T-cell (primary cell): ENCODE measurements at regions of chr6 and their contacts with region 1.

Region 1: DNA sequence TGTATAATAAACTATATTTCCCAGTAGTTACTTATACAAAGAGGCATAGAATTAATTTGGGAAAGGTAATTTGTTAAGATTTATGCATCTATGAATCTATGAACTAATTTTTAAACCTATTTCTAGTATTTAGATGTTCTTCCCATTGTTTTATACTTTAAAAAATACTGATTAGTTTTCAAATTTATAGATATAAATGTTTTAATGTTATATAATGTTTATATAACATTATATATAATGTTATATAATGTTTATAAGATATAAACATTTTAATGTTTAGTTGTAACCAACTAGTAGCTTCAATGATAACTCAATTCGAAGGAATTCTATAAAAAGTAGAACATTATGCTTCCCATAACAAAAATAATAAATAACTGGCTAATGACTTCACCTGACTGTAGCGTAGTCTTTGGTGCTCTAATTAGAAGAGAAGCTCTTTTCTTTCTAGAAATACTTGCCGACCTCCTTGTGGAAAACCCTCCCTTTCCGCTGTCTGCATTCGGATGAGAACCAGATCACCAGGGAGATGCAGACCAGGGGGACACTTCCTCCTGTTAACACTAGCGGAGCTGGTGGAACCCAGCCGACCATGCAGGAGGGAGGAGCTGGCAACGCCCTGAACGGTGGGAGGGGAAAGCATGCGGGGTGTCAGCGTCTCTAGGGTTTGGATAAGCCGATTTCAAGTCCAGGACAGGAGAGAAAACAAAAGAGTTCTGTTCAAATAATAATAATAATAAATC is 158.4 kb downstream of the OR2B2 start:
- DNase-seq: peak in 34 of 35 experiments; percentile 16 to 69 (median 46)
- ATAC-seq: peak in 1 of 4 experiments; percentile 27
- H3K4me3 ChIP-seq: peak overlapping the region; percentile 52 to 92
- H3K4me3 Mint-ChIP-seq: peak overlapping the region; percentile 82 to 98 (median 89)
- H3K27ac ChIP-seq: no peak overlapping the region
- H3K27ac Mint-ChIP-seq: peak overlapping the region; percentile 9 to 71
- H3K4me1 ChIP-seq: peaks cover 8 to 23% of the 10 kb centered on the region in 2 experiments
- H3K4me1 Mint-ChIP-seq: peaks cover 30 to 42% (median 37%) of the 10 kb centered on the region in 3 donors
- H3K27me3 ChIP-seq: peaks cover 0 to 13% of the 10 kb centered on the region in 2 experiments
- H3K27me3 Mint-ChIP-seq: peaks cover 0 to 7% of the 10 kb centered on the region in 2 donors

Region 2: DNA sequence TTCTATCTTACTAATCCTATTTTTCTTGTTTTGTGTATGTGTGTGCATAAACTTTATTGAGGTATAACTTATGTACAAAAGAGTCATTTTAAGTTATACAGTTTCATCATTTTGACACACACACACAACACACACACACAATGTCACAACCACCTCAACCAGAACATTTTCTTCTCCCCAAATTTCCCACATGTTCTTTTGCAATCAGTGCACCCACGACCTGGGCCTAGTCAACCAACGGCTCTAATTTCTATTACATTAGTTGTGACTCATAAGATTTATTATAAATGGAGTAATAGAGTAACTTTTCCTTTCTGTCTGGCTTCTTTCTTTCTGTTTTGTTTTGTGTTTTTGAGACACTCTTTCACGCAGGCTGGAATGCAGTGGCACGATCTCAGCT is 431.9 kb before region 1 on chr6:
- CTCF ChIA-PET with region 1: no interaction called
- POLR2A ChIA-PET with region 1: no interaction called
- DNase-seq: no peak
- ATAC-seq: no peak
- H3K4me3 ChIP-seq: no peak overlapping the region
- H3K4me3 Mint-ChIP-seq: no peak overlapping the region
- H3K27ac ChIP-seq: no peak overlapping the region
- H3K27ac Mint-ChIP-seq: no peak overlapping the region
- H3K4me1 ChIP-seq: no peaks in the 10 kb centered on the region
- H3K4me1 Mint-ChIP-seq: no peaks in the 10 kb centered on the region
- H3K27me3 ChIP-seq: peaks cover 10 to 11% of the 10 kb centered on the region in 2 experiments
- H3K27me3 Mint-ChIP-seq: peaks cover 42 to 48% of the 10 kb centered on the region in 2 donors

Region 3: GRCh38 chr6:27518881-27519795 is 234.7 kb before region 1 on chr6:
- CTCF ChIA-PET with region 1: interaction called in 1 of 2 experiments, 22 read pairs
- POLR2A ChIA-PET with region 1: no interaction called
- DNase-seq: peak; percentile 37 to 84 (median 53)
- ATAC-seq: peak; percentile 67 to 80 (median 76)
- H3K4me3 ChIP-seq: peak overlapping the region; percentile 92 to 98
- H3K4me3 Mint-ChIP-seq: peak overlapping the region; percentile 86 to 99 (median 90)
- H3K27ac ChIP-seq: peak overlapping the region; percentile 78
- H3K27ac Mint-ChIP-seq: peak overlapping the region; percentile 60 to 71
- H3K4me1 ChIP-seq: peaks cover 6 to 15% of the 10 kb centered on the region in 2 experiments
- H3K4me1 Mint-ChIP-seq: peaks cover 16 to 27% (median 20%) of the 10 kb centered on the region in 3 donors
- H3K27me3 ChIP-seq: peaks cover 3 to 17% of the 10 kb centered on the region in 2 experiments
- H3K27me3 Mint-ChIP-seq: peaks cover 9 to 24% of the 10 kb centered on the region in 2 donors

Region 4: DNA sequence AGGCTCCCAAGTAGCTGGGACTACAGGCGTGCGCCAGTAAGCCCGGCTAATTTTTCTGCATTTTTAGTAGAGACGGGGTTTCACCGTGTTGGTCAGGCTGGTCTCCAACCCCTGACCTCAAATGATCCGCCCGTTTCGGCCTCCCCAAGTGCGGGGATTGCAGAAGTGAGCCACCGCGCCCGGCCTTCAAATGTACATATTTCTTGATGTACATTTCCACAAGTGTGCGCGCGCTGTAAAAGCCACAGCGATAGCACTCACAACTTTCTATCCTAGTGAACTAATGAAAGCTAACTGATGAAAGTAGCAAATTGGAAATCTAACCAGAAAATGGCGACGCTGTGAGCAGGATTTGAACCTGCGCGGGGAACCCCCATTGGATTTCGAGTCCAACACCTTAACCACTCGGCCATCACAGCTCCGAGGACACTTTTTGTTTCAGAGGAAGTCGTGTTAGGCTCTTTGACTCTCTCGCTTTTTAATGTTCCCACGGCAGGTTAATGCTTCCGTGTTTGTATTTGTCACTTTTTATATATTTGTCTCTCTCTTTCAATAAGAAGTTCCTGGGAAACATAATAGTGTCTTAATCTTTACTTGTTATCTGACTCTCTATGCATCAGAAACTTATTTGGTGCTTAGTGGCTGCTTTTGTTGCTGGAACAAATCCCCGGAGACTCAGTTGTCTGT is 81.6 kb before region 1 on chr6:
- CTCF ChIA-PET with region 1: interaction called in 1 of 2 experiments, 8 read pairs
- POLR2A ChIA-PET with region 1: interaction called in 1 of 2 experiments, 13 read pairs
- DNase-seq: peak in 2 of 35 experiments; percentile 13 to 54
- ATAC-seq: no peak
- H3K4me3 ChIP-seq: peak overlapping the region in 1 of 2 donors; percentile 39
- H3K4me3 Mint-ChIP-seq: peak overlapping the region in 1 of 3 donors; percentile 56
- H3K27ac ChIP-seq: no peak overlapping the region
- H3K27ac Mint-ChIP-seq: peak overlapping the region in 1 of 2 donors; percentile 6
- H3K4me1 ChIP-seq: peaks cover 0 to 23% of the 10 kb centered on the region in 2 experiments
- H3K4me1 Mint-ChIP-seq: peaks cover 26 to 38% (median 32%) of the 10 kb centered on the region in 3 donors
- H3K27me3 ChIP-seq: peaks cover 38 to 77% of the 10 kb centered on the region in 2 experiments
- H3K27me3 Mint-ChIP-seq: peaks cover 74 to 87% of the 10 kb centered on the region in 2 donors

Region 5: DNA sequence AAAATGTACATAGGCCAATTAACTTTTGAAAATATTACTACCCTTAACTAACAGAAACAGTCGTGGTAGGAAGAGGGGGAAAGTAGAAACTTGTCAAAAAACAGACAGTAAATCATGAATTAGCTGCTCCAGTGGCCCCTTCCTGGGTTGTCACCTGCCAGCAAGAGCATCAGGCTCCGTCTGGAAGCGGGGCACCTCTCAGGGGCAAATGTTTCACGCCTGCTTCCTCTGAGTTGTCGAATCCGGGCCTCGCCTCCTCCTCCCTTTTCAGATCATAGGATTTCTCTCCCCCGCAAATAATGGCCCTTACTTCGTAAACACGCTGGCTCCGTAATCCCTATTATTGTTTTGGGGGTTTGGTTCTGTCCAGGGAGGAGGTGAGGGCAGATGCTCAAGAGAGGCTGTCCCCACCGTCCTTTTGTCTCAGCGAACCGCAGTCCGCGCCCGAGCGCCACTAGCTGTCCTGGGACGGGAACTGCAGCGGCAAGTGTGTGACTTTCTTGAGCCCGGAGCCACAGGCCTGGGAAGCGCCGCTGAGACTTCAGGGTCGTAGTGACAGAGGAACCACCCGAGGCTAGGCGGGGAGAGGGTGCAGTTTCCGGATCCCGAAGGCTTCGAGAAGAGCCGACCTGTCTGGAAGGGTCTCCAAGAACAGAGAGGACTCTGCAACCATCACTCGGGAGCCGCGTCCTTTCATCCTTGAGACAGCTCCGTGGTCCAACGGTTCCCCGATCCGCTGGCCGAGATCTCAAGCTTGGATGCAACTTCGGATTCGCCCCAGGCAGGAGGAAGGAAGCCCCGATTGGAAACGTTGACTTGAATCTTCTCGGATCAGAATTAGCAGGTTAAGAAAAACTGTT is 66.5 kb before region 1 on chr6:
- CTCF ChIA-PET with region 1: interaction called, 3 to 27 read pairs
- POLR2A ChIA-PET with region 1: interaction called in 1 of 2 experiments, 4 read pairs
- DNase-seq: peak; percentile 47 to 84 (median 65)
- ATAC-seq: peak; percentile 63 to 78 (median 76)
- H3K4me3 ChIP-seq: peak overlapping the region; percentile 78 to 79
- H3K4me3 Mint-ChIP-seq: peak overlapping the region; percentile 85 to 94 (median 85)
- H3K27ac ChIP-seq: peak overlapping the region; percentile 40
- H3K27ac Mint-ChIP-seq: peak overlapping the region; percentile 86 to 91
- H3K4me1 ChIP-seq: peaks cover 4 to 19% of the 10 kb centered on the region in 2 experiments
- H3K4me1 Mint-ChIP-seq: peaks cover 24 to 30% (median 27%) of the 10 kb centered on the region in 3 donors
- H3K27me3 ChIP-seq: peaks cover 10 to 18% of the 10 kb centered on the region in 2 experiments
- H3K27me3 Mint-ChIP-seq: peaks cover 0 to 11% of the 10 kb centered on the region in 2 donors

Region 6: GRCh38 chr6:27743818-27744217 is 10.0 kb before region 1 on chr6:
- CTCF ChIA-PET with region 1: interaction called in 1 of 2 experiments, 23 read pairs
- POLR2A ChIA-PET with region 1: no interaction called
- DNase-seq: no peak
- ATAC-seq: no peak
- H3K4me3 ChIP-seq: no peak overlapping the region
- H3K4me3 Mint-ChIP-seq: no peak overlapping the region
- H3K27ac ChIP-seq: no peak overlapping the region
- H3K27ac Mint-ChIP-seq: no peak overlapping the region
- H3K4me1 ChIP-seq: no peaks in the 10 kb centered on the region
- H3K4me1 Mint-ChIP-seq: peaks cover under 1 to 2% (median 2%) of the 10 kb centered on the region in 3 donors
- H3K27me3 ChIP-seq: peaks cover 9 to 34% of the 10 kb centered on the region in 2 experiments
- H3K27me3 Mint-ChIP-seq: peaks cover 25 to 35% of the 10 kb centered on the region in 2 donors

Region 7: DNA sequence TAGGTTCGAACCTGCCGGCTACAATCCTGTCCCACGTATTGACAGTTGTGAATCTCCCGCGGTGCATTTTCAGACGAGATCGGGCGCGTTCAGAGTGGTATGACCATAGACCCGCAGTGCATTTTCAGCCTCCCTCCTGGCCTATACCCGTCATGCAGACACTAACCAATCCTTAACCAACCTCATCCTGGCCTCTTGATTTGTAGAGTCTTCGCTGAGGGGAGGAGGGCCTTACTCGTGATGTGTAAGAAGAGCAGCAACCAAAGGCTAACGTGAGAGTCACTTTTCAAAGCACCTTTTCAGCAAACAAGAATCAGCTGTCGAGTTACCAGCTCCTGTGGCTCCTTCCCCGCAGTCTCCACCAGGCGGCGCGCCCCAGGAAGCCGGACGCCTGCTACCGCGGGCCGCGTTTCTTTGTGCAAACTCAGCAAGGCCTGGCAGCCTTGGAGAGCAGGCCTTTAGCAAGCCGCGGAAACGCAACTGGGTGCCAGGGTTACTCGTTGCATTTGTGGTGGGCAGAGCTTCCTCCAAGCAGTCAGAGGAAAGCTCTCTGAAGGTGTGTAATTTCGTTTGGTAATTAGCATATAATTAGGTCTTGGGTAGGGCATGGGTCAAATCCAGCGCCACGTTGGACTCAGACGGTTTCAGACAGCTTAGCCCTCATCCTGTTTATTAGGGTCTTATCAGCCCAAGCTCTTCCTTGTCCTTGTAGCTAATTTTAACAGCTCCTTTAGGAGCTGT is 18.6 kb after region 1 on chr6:
- CTCF ChIA-PET with region 1: interaction called, 7 to 15 read pairs
- POLR2A ChIA-PET with region 1: no interaction called
- DNase-seq: peak; percentile 74 to 90 (median 84)
- ATAC-seq: peak; percentile 98 to 99 (median 98)
- H3K4me3 ChIP-seq: no peak overlapping the region
- H3K4me3 Mint-ChIP-seq: peak overlapping the region in 2 of 3 donors; percentile 7 to 30
- H3K27ac ChIP-seq: no peak overlapping the region
- H3K27ac Mint-ChIP-seq: no peak overlapping the region
- H3K4me1 ChIP-seq: peaks cover 0 to 12% of the 10 kb centered on the region in 2 experiments
- H3K4me1 Mint-ChIP-seq: peaks cover 8% of the 10 kb centered on the region in 3 donors
- H3K27me3 ChIP-seq: peaks cover 0 to 5% of the 10 kb centered on the region in 2 experiments
- H3K27me3 Mint-ChIP-seq: peaks cover 11 to 20% of the 10 kb centered on the region in 2 donors

Region 8: DNA sequence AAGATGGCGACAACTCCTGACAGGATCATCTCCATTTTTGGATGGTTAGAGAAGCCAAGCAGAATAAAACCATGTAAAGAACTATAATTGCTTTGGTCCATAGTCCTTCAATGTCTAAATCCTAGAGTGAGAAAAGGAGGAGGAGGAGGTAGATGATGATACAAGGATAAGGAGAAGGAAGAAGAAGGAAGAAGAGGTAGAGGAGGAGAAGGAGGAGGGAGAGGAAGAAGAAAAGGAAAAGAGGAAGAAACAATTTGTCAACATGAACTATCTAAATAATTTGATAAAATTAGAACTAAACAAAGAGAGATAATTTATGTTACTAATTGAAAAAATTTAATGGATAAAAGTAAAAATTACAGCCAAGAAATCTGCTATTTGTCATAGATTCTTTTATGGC is 1291.2 kb after region 1 on chr6 and contains the start of gene OR2W1:
- CTCF ChIA-PET with region 1: no interaction called
- POLR2A ChIA-PET with region 1: no interaction called
- DNase-seq: no peak
- ATAC-seq: no peak
- H3K4me3 ChIP-seq: no peak within 1 kb of the TSS
- H3K4me3 Mint-ChIP-seq: no peak within 1 kb of the TSS
- H3K27ac ChIP-seq: no peak within 1 kb of the TSS
- H3K27ac Mint-ChIP-seq: no peak within 1 kb of the TSS
- H3K4me1 ChIP-seq: no peaks in the 10 kb centered on the region
- H3K4me1 Mint-ChIP-seq: no peaks in the 10 kb centered on the region
- H3K27me3 ChIP-seq: peaks cover 3 to 6% of the 10 kb centered on the region in 2 experiments
- H3K27me3 Mint-ChIP-seq: peaks cover 47 to 56% of the 10 kb centered on the region in 2 donors
- total RNA-seq, gene OR2W1: not detected